ENCODE measurements at regions of chr10 and their contacts with region 1.

Region 1: GRCh38 chr10:72048450-72049124 is 39.8 kb downstream of the SPOCK2 start:
- DNase-seq: peak; percentile 81
- ATAC-seq: peak; percentile 98
- H3K4me3 ChIP-seq: no peak overlapping the region
- H3K27ac ChIP-seq: no peak overlapping the region
- H3K4me1 ChIP-seq: peaks cover 3% of the 10 kb centered on the region; the same call in 1 of the 2 replicates
- H3K27me3 ChIP-seq: no peaks in the 10 kb centered on the region
- CTCF ChIP-seq: peak; percentile 99 to 100 (median 99); a peak in 5 of 6 replicates
- EP300 ChIP-seq: no peak
- POLR2A ChIP-seq: no peak
- RAD21 ChIP-seq: peak; percentile 98

Region 2: DNA sequence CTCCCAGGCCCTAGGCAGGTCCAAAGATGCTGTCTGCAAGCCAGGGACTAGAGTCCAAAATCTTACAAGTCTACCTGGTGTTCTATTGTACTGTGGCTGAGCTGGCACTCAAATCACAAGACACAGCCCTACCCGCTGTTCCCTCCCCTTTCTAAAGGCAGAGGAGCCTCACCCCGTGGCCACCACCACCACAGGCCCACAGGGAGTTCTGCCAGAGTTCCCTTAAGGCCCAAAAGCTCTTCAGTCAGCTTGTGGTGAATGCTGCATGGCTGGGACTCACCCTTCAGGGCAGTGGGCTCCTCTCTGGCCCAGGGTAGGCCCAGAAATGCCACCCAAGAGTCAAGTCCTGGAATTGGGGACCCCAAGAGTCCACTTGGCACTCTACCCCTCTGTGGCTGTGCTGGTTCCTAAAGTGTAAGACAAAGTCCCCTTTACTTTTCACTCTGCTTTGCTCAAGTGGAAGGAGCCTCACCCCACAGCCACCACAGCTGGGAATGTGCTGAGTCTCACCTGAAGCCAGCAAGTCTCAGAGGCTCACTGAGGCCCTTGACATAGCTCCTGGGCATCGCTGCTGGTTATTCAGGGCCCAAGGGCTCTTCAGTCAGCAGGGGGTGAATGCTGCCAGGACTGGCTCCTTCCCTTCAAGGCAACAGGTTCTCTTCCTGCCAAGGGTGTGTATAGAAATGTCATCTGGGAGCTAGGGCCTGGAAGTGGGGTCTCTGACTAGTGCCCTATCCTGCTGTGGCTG is 148.7 kb before region 1 on chr10:
- CTCF ChIA-PET with region 1: interaction called, 136 read pairs
- POLR2A ChIA-PET with region 1: interaction called, 5 read pairs
- RAD21 ChIA-PET with region 1: interaction called, 90 read pairs
- SMC1A ChIA-PET with region 1: interaction called, 107 read pairs
- in situ Hi-C with region 1: no loop called
- intact Hi-C with region 1: loop called (anchors 1 kb)
- DNase-seq: no peak
- ATAC-seq: no peak
- H3K4me3 ChIP-seq: no peak overlapping the region
- H3K27ac ChIP-seq: no peak overlapping the region
- H3K4me1 ChIP-seq: no peaks in the 10 kb centered on the region
- H3K27me3 ChIP-seq: no peaks in the 10 kb centered on the region
- CTCF ChIP-seq: no peak
- EP300 ChIP-seq: no peak
- POLR2A ChIP-seq: no peak
- RAD21 ChIP-seq: no peak

Region 3: GRCh38 chr10:71963756-71964668 is 84.6 kb before region 1 on chr10 and contains the start of gene CHST3:
- CTCF ChIA-PET with region 1: interaction called, 214 read pairs
- POLR2A ChIA-PET with region 1: no interaction called
- RAD21 ChIA-PET with region 1: interaction called, 127 read pairs
- SMC1A ChIA-PET with region 1: interaction called, 101 read pairs
- in situ Hi-C with region 1: loop called (anchors 5 kb)
- intact Hi-C with region 1: loop called (anchors 2 kb)
- DNase-seq: no peak
- ATAC-seq: peak; percentile 75
- H3K4me3 ChIP-seq: peak within 1 kb of the TSS; percentile 16
- H3K27ac ChIP-seq: no peak within 1 kb of the TSS
- H3K4me1 ChIP-seq: no peaks in the 10 kb centered on the region
- H3K27me3 ChIP-seq: peaks cover 0 to 3% of the 10 kb centered on the region in 2 experiments; a peak in 2 of 4 replicates
- CTCF ChIP-seq: no peak
- EP300 ChIP-seq: no peak
- POLR2A ChIP-seq: no peak
- RAD21 ChIP-seq: no peak
- polyA plus RNA-seq, gene CHST3: 0.04 TPM in 1 of 2 experiments, not detected in the other

Region 4: GRCh38 chr10:72069751-72070526 is 21.4 kb after region 1 on chr10:
- CTCF ChIA-PET with region 1: interaction called, 65 read pairs
- POLR2A ChIA-PET with region 1: no interaction called
- RAD21 ChIA-PET with region 1: interaction called, 34 read pairs
- SMC1A ChIA-PET with region 1: interaction called, 16 read pairs
- in situ Hi-C with region 1: no loop called
- intact Hi-C with region 1: no loop called
- DNase-seq: no peak
- ATAC-seq: no peak; the same call in 2 of the 3 replicates
- H3K4me3 ChIP-seq: no peak overlapping the region
- H3K27ac ChIP-seq: no peak overlapping the region
- H3K4me1 ChIP-seq: peaks cover 1% of the 10 kb centered on the region
- H3K27me3 ChIP-seq: no peaks in the 10 kb centered on the region
- CTCF ChIP-seq: peak in 2 of 3 experiments; percentile 19 to 25; a peak in 3 of 6 replicates
- EP300 ChIP-seq: no peak
- POLR2A ChIP-seq: no peak
- RAD21 ChIP-seq: peak; percentile 33; the same call in 1 of the 2 replicates

Region 5: DNA sequence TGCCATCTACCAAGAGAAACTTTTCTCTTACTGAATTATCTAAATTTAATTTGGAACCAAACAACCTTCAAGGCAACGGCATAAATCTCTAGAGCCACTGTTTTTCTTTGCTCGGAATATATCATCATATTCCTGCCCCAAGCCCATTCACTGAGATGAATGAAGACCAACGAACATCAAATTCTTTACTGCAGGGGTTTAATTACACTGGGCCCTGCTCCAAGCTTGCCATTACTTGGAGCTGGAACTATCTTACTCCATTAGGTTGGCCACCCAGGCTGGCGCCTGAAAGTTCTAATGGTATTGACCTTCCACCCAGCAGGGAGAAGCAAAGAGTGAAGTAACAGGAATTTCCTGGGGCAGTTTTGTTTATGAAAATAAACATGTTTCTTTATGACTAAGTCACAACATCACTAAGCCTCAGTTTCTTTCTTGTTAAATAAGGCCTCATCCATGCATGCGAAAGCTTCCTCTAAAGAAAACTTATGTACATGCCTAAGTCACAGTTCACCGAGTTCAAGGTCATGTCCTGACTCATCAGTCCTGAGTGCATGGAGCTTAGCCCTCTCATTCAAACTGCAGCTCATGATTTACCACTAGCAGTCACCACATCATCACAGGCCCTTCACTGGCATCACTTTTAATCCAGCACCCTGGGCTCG is 125.2 kb after region 1 on chr10:
- CTCF ChIA-PET with region 1: interaction called, 9 read pairs
- POLR2A ChIA-PET with region 1: no interaction called
- RAD21 ChIA-PET with region 1: interaction called, 12 read pairs
- SMC1A ChIA-PET with region 1: interaction called, 8 read pairs
- in situ Hi-C with region 1: no loop called
- intact Hi-C with region 1: no loop called
- DNase-seq: peak; percentile 86
- ATAC-seq: peak; percentile 91
- H3K4me3 ChIP-seq: no peak overlapping the region; the same call in 1 of the 2 replicates
- H3K27ac ChIP-seq: peak overlapping the region; percentile 67
- H3K4me1 ChIP-seq: peaks cover 35% of the 10 kb centered on the region
- H3K27me3 ChIP-seq: no peaks in the 10 kb centered on the region
- CTCF ChIP-seq: no peak
- EP300 ChIP-seq: no peak
- POLR2A ChIP-seq: no peak
- RAD21 ChIP-seq: no peak

Region 6: DNA sequence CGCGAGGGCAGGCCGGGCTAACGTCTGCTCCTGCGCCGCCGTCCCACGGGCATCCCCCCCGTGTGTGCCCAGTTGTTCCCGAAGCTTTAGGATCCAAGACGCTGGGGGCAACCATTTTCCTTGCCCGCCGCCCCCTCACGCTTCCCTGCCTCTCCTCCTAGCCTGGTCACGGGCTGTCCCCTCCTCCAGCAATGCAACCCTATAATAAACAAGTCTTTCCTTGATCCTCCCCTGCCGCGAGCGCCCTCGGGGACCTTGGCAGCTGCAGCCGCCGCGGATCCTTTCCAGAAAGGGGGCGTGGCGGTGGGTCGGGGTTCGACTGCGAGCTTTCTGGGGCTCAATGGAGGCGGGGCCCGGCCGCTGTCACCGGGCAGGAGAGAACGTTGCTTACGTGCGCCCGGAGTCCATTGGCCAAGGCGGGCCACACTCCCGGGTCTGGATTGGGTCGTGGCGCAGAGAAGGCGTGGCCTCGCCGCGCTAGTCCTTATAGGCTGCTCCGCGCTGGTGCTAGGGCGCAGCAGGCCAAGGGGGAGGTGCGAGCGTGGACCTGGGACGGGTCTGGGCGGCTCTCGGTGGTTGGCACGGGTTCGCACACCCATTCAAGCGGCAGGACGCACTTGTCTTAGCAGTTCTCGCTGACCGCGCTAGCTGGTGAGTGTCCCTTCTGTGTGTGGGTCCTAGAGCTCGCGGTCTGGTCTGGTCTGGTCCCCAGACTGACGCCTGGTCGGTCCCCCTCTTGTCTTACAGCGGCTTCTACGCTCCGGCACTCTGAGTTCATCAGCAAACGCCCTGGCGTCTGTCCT is 225.0 kb after region 1 on chr10 and contains the start of gene DDIT4:
- CTCF ChIA-PET with region 1: interaction called, 11 read pairs
- POLR2A ChIA-PET with region 1: no interaction called
- RAD21 ChIA-PET with region 1: interaction called, 7 read pairs
- SMC1A ChIA-PET with region 1: interaction called, 5 read pairs
- in situ Hi-C with region 1: no loop called
- intact Hi-C with region 1: no loop called
- DNase-seq: peak; percentile 97
- ATAC-seq: peak; percentile 89
- H3K4me3 ChIP-seq: peak within 1 kb of the TSS; percentile 92
- H3K27ac ChIP-seq: peak within 1 kb of the TSS; percentile 96
- H3K4me1 ChIP-seq: peaks cover 12% of the 10 kb centered on the region
- H3K27me3 ChIP-seq: no peaks in the 10 kb centered on the region
- CTCF ChIP-seq: no peak
- EP300 ChIP-seq: 0 out of 4 replicates have a peak, but pooled peaks have one; percentile 37 to 39
- POLR2A ChIP-seq: peak; percentile 100
- RAD21 ChIP-seq: 0 out of 2 replicates have a peak, but pooled peaks have one; percentile 16
- polyA plus RNA-seq, gene DDIT4: 2.1 to 5.0 TPM